ENCODE measurements at regions of chr2 and their contacts with region 1.

Region 1: GRCh38 chr2:101725515-101726192 is 28.1 kb downstream of the MAP4K4 start:
- DNase-seq: peak in 4 of 14 experiments; percentile 47 to 65 (median 58)
- ATAC-seq: no peak
- H3K4me3 ChIP-seq: no peak overlapping the region
- H3K4me3 Mint-ChIP-seq: peak overlapping the region; percentile 16
- H3K27ac ChIP-seq: no peak overlapping the region
- H3K27ac Mint-ChIP-seq: peak overlapping the region; percentile 50
- H3K4me1 ChIP-seq: peaks cover 57% of the 10 kb centered on the region
- H3K4me1 Mint-ChIP-seq: peaks cover 96% of the 10 kb centered on the region
- H3K27me3 ChIP-seq: no peaks in the 10 kb centered on the region
- H3K27me3 Mint-ChIP-seq: no peaks in the 10 kb centered on the region
- CTCF ChIP-seq: no peak

Region 2: GRCh38 chr2:101473911-101474701 is 251.5 kb before region 1 on chr2:
- CTCF ChIA-PET with region 1: no interaction called
- POLR2A ChIA-PET with region 1: interaction called, 3 read pairs
- intact Hi-C with region 1: loop called in 1 of 2 experiments (anchors 10 kb)
- DNase-seq: peak in 12 of 14 experiments; percentile 4 to 54 (median 19)
- ATAC-seq: peak; percentile 43
- H3K4me3 ChIP-seq: peak overlapping the region; percentile 58
- H3K4me3 Mint-ChIP-seq: peak overlapping the region; percentile 88
- H3K27ac ChIP-seq: no peak overlapping the region
- H3K27ac Mint-ChIP-seq: peak overlapping the region; percentile 73
- H3K4me1 ChIP-seq: peaks cover 17% of the 10 kb centered on the region
- H3K4me1 Mint-ChIP-seq: peaks cover 8% of the 10 kb centered on the region
- H3K27me3 ChIP-seq: no peaks in the 10 kb centered on the region
- H3K27me3 Mint-ChIP-seq: no peaks in the 10 kb centered on the region
- CTCF ChIP-seq: no peak

Region 3: GRCh38 chr2:101746388-101746723 is 20.7 kb after region 1 on chr2:
- CTCF ChIA-PET with region 1: no interaction called
- POLR2A ChIA-PET with region 1: interaction called, 12 read pairs
- intact Hi-C with region 1: no loop called
- DNase-seq: no peak
- ATAC-seq: no peak
- H3K4me3 ChIP-seq: no peak overlapping the region
- H3K4me3 Mint-ChIP-seq: no peak overlapping the region
- H3K27ac ChIP-seq: no peak overlapping the region
- H3K27ac Mint-ChIP-seq: peak overlapping the region; percentile 61
- H3K4me1 ChIP-seq: peaks cover 53% of the 10 kb centered on the region
- H3K4me1 Mint-ChIP-seq: peaks cover 79% of the 10 kb centered on the region
- H3K27me3 ChIP-seq: no peaks in the 10 kb centered on the region
- H3K27me3 Mint-ChIP-seq: no peaks in the 10 kb centered on the region
- CTCF ChIP-seq: no peak

Region 4: DNA sequence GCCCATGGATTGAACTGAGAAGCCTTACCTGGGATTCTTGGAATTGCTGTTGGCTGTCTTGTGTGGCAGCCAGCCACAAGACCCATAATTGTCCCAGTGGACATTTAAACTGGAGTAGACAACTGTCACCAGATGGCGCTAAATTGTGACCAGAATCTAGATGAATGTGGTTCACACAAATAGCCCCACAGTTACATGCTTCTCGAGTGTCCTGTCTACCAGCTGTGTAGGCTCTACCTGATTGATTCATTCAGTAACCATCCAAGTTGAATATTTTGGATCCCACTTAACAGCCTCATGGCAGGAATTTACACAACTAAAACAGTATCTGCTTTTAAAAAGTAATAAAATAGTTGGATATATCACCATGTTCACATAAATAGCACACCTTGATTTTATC is 45.1 kb after region 1 on chr2:
- CTCF ChIA-PET with region 1: interaction called, 3 read pairs
- POLR2A ChIA-PET with region 1: no interaction called
- intact Hi-C with region 1: loop called in 1 of 2 experiments (anchors 5 kb)
- DNase-seq: peak in 3 of 14 experiments; percentile 20 to 49 (median 45)
- ATAC-seq: no peak
- H3K4me3 ChIP-seq: no peak overlapping the region
- H3K4me3 Mint-ChIP-seq: peak overlapping the region; percentile 59
- H3K27ac ChIP-seq: no peak overlapping the region
- H3K27ac Mint-ChIP-seq: peak overlapping the region; percentile 81
- H3K4me1 ChIP-seq: peaks cover 62% of the 10 kb centered on the region
- H3K4me1 Mint-ChIP-seq: peaks cover 95% of the 10 kb centered on the region
- H3K27me3 ChIP-seq: no peaks in the 10 kb centered on the region
- H3K27me3 Mint-ChIP-seq: no peaks in the 10 kb centered on the region
- CTCF ChIP-seq: no peak